B cell (primary cell): ENCODE measurements at regions of chr16 and their contacts with region 1.

Region 1: DNA sequence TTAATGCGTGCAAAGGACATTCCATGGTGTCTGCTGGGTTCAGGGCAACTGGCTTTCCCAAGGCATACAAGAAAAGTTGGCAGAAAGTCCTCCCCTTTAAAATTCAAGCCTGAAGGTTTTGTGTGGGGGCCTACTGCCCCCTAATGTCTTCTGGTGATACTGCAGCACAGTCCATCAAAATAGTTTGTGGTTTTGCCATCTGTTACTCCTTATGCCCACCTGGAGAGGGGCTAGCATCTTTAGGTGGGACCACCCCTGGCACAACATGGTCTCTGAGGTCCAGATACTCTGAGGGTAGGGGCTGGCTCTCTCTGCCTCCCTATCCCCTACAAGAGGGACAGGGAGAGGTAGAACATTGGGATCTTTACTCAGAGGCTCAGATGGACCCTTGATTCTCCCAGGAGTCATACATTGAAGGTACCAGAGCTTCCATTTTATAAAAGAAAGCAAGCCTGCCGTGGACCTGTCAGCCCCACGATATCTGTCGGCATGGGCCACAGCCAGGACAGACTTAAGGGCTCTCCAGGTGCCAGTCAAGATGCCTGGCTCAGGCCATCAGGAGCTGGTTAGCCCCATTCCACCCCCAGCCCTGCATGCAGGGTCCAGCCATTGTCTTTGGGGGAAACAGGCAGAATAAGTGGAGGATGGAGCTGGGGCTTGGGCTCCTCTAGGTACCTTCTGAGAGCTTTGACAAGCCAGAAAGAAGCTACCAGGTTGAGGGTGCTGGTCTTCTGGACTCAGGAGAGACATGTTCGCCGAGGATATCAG is 6.3 kb downstream of the ESRP2 start:
- DNase-seq: peak; percentile 70
- ATAC-seq: peak; percentile 53
- H3K4me3 ChIP-seq: no peak overlapping the region
- H3K4me3 Mint-ChIP-seq: no peak overlapping the region
- H3K27ac ChIP-seq: no peak overlapping the region
- H3K27ac Mint-ChIP-seq: peak overlapping the region; percentile 82
- H3K4me1 ChIP-seq: peaks cover 27 to 28% of the 10 kb centered on the region in 2 donors
- H3K4me1 Mint-ChIP-seq: peaks cover 46% of the 10 kb centered on the region
- H3K27me3 ChIP-seq: no peaks in the 10 kb centered on the region
- H3K27me3 Mint-ChIP-seq: no peaks in the 10 kb centered on the region
- CTCF ChIP-seq: peak; percentile 96

Region 2: GRCh38 chr16:67968400-67969253 is 261.0 kb before region 1 on chr16 and contains the start of gene SLC12A4:
- CTCF ChIA-PET with region 1: no interaction called
- POLR2A ChIA-PET with region 1: no interaction called
- intact Hi-C with region 1: loop called (anchors 10 kb)
- DNase-seq: peak; percentile 83
- ATAC-seq: peak; percentile 92
- H3K4me3 ChIP-seq: peak within 1 kb of the TSS; percentile 22 to 95 (median 80)
- H3K4me3 Mint-ChIP-seq: peak within 1 kb of the TSS; percentile 88
- H3K27ac ChIP-seq: peak within 1 kb of the TSS; percentile 10 to 63
- H3K27ac Mint-ChIP-seq: peak within 1 kb of the TSS; percentile 91
- H3K4me1 ChIP-seq: peaks cover 10 to 19% of the 10 kb centered on the region in 2 donors
- H3K4me1 Mint-ChIP-seq: peaks cover 20% of the 10 kb centered on the region
- H3K27me3 ChIP-seq: no peaks in the 10 kb centered on the region
- H3K27me3 Mint-ChIP-seq: no peaks in the 10 kb centered on the region
- CTCF ChIP-seq: no peak
- total RNA-seq, gene SLC12A4: 42.2 and 43.8 TPM in 2 replicates

Region 3: DNA sequence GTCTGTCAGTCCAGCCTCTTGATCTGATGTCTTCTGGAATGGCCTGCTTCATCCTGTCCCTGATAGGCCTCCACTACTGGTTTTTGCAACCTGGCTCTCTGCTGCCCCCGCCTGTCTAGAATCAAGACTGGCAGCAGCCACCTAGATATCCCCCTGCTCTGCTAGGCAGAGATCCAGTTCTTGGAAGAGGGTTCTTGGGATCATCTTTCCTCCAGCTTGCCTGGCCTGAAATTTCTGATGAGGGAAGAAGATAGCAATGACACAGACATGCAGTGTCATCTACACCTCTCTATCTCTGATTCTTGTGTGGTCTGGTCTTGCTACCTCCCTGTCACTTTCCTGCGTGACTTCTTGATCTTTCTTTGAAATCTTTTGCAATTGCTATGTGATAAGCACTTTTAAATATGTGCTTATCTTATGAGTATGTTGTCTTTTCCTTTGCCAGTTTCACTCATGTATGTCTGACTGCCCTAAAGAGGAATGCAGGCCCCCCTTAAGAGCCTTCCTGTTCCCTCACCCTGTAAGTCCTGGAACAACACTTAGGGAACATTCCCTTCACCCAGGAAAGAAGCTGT is 164.7 kb before region 1 on chr16:
- CTCF ChIA-PET with region 1: interaction called, 15 read pairs
- POLR2A ChIA-PET with region 1: no interaction called
- intact Hi-C with region 1: loop called (anchors 1 kb)
- DNase-seq: peak; percentile 74
- ATAC-seq: peak; percentile 93
- H3K4me3 ChIP-seq: no peak overlapping the region
- H3K4me3 Mint-ChIP-seq: no peak overlapping the region
- H3K27ac ChIP-seq: no peak overlapping the region
- H3K27ac Mint-ChIP-seq: peak overlapping the region; percentile 33
- H3K4me1 ChIP-seq: peaks cover 9 to 22% of the 10 kb centered on the region in 2 donors
- H3K4me1 Mint-ChIP-seq: peaks cover 23% of the 10 kb centered on the region
- H3K27me3 ChIP-seq: no peaks in the 10 kb centered on the region
- H3K27me3 Mint-ChIP-seq: no peaks in the 10 kb centered on the region
- CTCF ChIP-seq: peak; percentile 90

Region 4: GRCh38 chr16:68074850-68075555 is 154.6 kb before region 1 on chr16:
- CTCF ChIA-PET with region 1: interaction called, 10 read pairs
- POLR2A ChIA-PET with region 1: interaction called, 3 read pairs
- intact Hi-C with region 1: no loop called
- DNase-seq: peak; percentile 93
- ATAC-seq: peak; percentile 86
- H3K4me3 ChIP-seq: peak overlapping the region in 4 of 5 experiments; percentile 11 to 48 (median 30)
- H3K4me3 Mint-ChIP-seq: peak overlapping the region; percentile 85
- H3K27ac ChIP-seq: peak overlapping the region; percentile 77 to 91
- H3K27ac Mint-ChIP-seq: peak overlapping the region; percentile 94
- H3K4me1 ChIP-seq: peaks cover 88 to 99% of the 10 kb centered on the region in 2 donors
- H3K4me1 Mint-ChIP-seq: peaks cover 87% of the 10 kb centered on the region
- H3K27me3 ChIP-seq: no peaks in the 10 kb centered on the region
- H3K27me3 Mint-ChIP-seq: no peaks in the 10 kb centered on the region
- CTCF ChIP-seq: no peak

Region 5: GRCh38 chr16:68093816-68094613 is 135.6 kb before region 1 on chr16:
- CTCF ChIA-PET with region 1: interaction called, 28 read pairs
- POLR2A ChIA-PET with region 1: no interaction called
- intact Hi-C with region 1: loop called (anchors 1 kb)
- DNase-seq: peak; percentile 51
- ATAC-seq: peak; percentile 75
- H3K4me3 ChIP-seq: no peak overlapping the region
- H3K4me3 Mint-ChIP-seq: peak overlapping the region; percentile 46
- H3K27ac ChIP-seq: peak overlapping the region; percentile 22 to 54
- H3K27ac Mint-ChIP-seq: peak overlapping the region; percentile 70
- H3K4me1 ChIP-seq: peaks cover 60 to 77% of the 10 kb centered on the region in 2 donors
- H3K4me1 Mint-ChIP-seq: peaks cover 78% of the 10 kb centered on the region
- H3K27me3 ChIP-seq: no peaks in the 10 kb centered on the region
- H3K27me3 Mint-ChIP-seq: no peaks in the 10 kb centered on the region
- CTCF ChIP-seq: peak; percentile 70

Region 6: GRCh38 chr16:68253721-68254120 is 24.1 kb after region 1 on chr16:
- CTCF ChIA-PET with region 1: no interaction called
- POLR2A ChIA-PET with region 1: no interaction called
- intact Hi-C with region 1: no loop called
- DNase-seq: no peak
- ATAC-seq: no peak
- H3K4me3 ChIP-seq: no peak overlapping the region
- H3K4me3 Mint-ChIP-seq: no peak overlapping the region
- H3K27ac ChIP-seq: no peak overlapping the region
- H3K27ac Mint-ChIP-seq: no peak overlapping the region
- H3K4me1 ChIP-seq: peaks cover 35 to 37% of the 10 kb centered on the region in 2 donors
- H3K4me1 Mint-ChIP-seq: peaks cover 30% of the 10 kb centered on the region
- H3K27me3 ChIP-seq: no peaks in the 10 kb centered on the region
- H3K27me3 Mint-ChIP-seq: no peaks in the 10 kb centered on the region
- CTCF ChIP-seq: no peak